PC-3 (cell line): ENCODE measurements at regions of chr17 and their contacts with region 1.

Region 1: DNA sequence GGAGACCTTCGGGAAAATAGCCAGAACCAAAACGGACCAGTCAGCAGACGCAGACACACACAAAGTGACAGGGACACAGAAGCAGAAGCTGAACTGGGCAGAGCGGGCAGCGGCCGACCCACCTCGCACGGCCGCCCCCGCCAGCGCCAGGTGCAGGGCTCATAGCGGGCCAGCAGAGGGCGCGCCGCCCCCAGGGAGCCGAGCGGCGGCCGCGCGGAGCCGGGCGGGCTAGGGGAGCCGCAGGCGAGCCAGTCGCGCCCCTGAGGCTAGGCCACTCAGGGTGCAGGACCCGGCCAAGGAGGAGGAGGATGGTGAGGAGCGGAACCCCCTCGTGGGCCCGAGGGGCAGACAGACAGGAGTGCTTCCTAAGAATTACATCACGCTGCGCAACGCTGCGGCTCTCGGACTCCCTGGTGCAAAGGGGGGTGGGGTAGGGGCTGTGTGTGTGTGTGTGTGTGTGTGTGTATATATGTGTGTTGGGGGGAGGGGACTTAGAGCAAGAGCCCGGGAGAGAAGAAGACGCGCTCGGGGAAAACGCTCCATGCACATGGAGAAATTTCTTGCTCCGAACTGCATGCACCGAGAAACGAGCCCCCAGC is 913 bp upstream of the NOG start:
- DNase-seq: peak; percentile 81
- ATAC-seq: peak; percentile 36
- H3K4me3 ChIP-seq: peak overlapping the region; percentile 74
- H3K27ac ChIP-seq: no peak overlapping the region
- H3K4me1 ChIP-seq: peaks cover 11% of the 10 kb centered on the region; the same call in 1 of the 2 replicates
- H3K27me3 ChIP-seq: peaks cover 26% of the 10 kb centered on the region
- CTCF ChIP-seq: peak; percentile 93

Region 2: DNA sequence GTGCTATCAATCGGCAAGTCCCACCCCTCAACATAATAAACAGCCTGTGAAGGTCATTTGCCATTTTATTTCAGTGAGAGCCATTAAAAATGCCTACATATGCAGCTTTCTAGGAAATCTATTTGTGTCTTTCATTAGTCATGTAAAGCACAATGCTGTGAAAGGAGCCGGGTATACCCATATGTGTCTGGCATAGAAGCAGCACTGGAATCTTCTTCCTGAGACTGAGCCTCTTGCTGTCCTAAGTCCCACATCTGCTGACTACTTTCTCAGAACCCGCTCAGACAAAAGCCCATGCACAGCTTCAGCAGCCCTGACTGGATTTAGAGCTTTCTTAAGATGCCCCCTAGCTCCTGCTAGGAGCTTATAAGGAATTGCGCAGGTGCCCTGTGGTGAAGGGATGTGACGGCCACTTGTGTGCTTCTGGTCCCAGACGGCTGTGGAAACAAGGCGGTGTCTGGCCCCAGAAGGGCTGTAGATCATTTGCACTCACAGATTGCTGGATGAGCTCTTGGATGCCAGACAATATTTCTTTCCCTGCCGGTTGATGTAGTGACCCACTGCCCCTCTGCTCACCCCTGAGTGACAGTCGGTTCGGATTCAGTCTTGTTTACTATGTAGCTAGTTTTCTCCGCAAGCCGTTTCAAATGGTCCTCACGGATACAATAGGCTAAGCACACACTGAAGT is 267.1 kb before region 1 on chr17:
- CTCF ChIA-PET with region 1: no interaction called
- POLR2A ChIA-PET with region 1: no interaction called
- intact Hi-C with region 1: no loop called
- DNase-seq: no peak
- ATAC-seq: no peak
- H3K4me3 ChIP-seq: no peak overlapping the region
- H3K27ac ChIP-seq: no peak overlapping the region
- H3K4me1 ChIP-seq: no peaks in the 10 kb centered on the region
- H3K27me3 ChIP-seq: peaks cover 67% of the 10 kb centered on the region
- CTCF ChIP-seq: no peak

Region 3: GRCh38 chr17:56499799-56500388 is 92.7 kb before region 1 on chr17:
- CTCF ChIA-PET with region 1: interaction called, 13 read pairs
- POLR2A ChIA-PET with region 1: no interaction called
- intact Hi-C with region 1: no loop called
- DNase-seq: peak; percentile 73
- ATAC-seq: no peak; the same call in 1 of the 2 replicates
- H3K4me3 ChIP-seq: no peak overlapping the region
- H3K27ac ChIP-seq: no peak overlapping the region
- H3K4me1 ChIP-seq: 0 out of 2 replicates have a peak, but pooled peaks cover 1% of the 10 kb centered on the region
- H3K27me3 ChIP-seq: peaks cover 32% of the 10 kb centered on the region
- CTCF ChIP-seq: peak; percentile 86

Region 4: GRCh38 chr17:56510554-56511342 is 81.8 kb before region 1 on chr17:
- CTCF ChIA-PET with region 1: no interaction called
- POLR2A ChIA-PET with region 1: no interaction called
- intact Hi-C with region 1: no loop called
- DNase-seq: no peak
- ATAC-seq: no peak
- H3K4me3 ChIP-seq: no peak overlapping the region
- H3K27ac ChIP-seq: no peak overlapping the region
- H3K4me1 ChIP-seq: peaks cover under 1% of the 10 kb centered on the region; the same call in 1 of the 2 replicates
- H3K27me3 ChIP-seq: peaks cover 53% of the 10 kb centered on the region
- CTCF ChIP-seq: no peak

Region 5: GRCh38 chr17:56604691-56605290 is 12.2 kb after region 1 on chr17:
- CTCF ChIA-PET with region 1: no interaction called
- POLR2A ChIA-PET with region 1: no interaction called
- intact Hi-C with region 1: no loop called
- DNase-seq: no peak
- ATAC-seq: no peak
- H3K4me3 ChIP-seq: no peak overlapping the region
- H3K27ac ChIP-seq: no peak overlapping the region
- H3K4me1 ChIP-seq: no peaks in the 10 kb centered on the region
- H3K27me3 ChIP-seq: no peaks in the 10 kb centered on the region
- CTCF ChIP-seq: no peak

Region 6: DNA sequence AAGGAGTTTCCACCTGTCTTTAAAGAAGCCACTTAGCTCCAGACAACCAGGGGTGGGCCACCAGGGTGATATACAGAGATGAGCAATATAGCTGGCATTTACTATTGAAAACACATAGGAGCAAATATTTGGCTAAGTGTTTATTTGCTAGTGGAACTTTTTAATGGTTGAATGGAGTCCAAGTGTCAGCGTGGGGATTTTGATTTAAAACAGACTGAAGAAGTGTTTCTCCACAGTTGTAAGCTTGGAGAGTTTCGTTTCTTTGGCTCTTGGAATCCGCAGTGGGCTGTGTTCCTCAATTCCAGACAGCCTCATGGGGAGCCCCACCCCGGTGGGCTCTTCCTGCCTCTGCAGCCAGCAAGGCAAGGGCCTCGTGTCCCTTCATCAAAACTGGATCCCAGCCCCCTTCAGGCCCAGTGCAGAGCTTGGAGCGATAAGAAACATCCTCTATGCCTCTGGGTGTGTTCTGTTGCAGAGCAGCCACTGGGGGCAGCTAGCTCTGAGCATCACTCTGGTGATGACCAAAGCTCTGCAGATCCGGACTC is 37.0 kb after region 1 on chr17:
- CTCF ChIA-PET with region 1: interaction called, 9 read pairs
- POLR2A ChIA-PET with region 1: no interaction called
- intact Hi-C with region 1: loop called (anchors 1 kb)
- DNase-seq: peak; percentile 71
- ATAC-seq: peak; percentile 97
- H3K4me3 ChIP-seq: no peak overlapping the region; the same call in 1 of the 2 replicates
- H3K27ac ChIP-seq: no peak overlapping the region
- H3K4me1 ChIP-seq: peaks cover 11% of the 10 kb centered on the region; the same call in 1 of the 2 replicates
- H3K27me3 ChIP-seq: no peaks in the 10 kb centered on the region
- CTCF ChIP-seq: peak; percentile 70

Region 7: DNA sequence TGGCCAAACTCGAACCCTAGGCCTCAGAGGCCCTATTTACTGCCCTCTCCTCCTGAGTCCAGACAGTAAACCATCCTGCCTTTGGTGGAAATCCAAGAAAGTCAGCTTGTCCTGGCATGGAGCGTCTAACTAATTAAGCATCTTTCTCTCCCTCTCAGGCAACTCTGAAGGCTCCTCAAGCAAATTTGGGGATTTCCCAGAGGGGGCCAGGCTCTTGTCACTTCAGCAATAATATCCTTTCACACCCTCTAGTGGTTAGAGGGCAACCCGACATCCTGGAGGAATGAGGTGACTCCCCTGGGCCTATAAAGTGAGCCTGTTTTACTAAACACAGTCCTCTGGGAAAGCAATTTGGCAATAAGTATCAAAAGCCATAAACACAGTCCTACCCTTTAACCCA is 61.3 kb after region 1 on chr17:
- CTCF ChIA-PET with region 1: interaction called, 3 read pairs
- POLR2A ChIA-PET with region 1: interaction called, 3 read pairs
- intact Hi-C with region 1: loop called (anchors 1 kb)
- DNase-seq: peak; percentile 91
- ATAC-seq: peak; percentile 87
- H3K4me3 ChIP-seq: no peak overlapping the region
- H3K27ac ChIP-seq: no peak overlapping the region
- H3K4me1 ChIP-seq: peaks cover 14% of the 10 kb centered on the region
- H3K27me3 ChIP-seq: no peaks in the 10 kb centered on the region
- CTCF ChIP-seq: peak; percentile 91

Region 8: GRCh38 chr17:56679115-56679766 is 86.7 kb after region 1 on chr17:
- CTCF ChIA-PET with region 1: interaction called, 3 read pairs
- POLR2A ChIA-PET with region 1: interaction called, 4 read pairs
- intact Hi-C with region 1: loop called (anchors 1 kb)
- DNase-seq: peak; percentile 68
- ATAC-seq: peak; percentile 45
- H3K4me3 ChIP-seq: peak overlapping the region; percentile 19; the same call in 1 of the 2 replicates
- H3K27ac ChIP-seq: peak overlapping the region; percentile 61
- H3K4me1 ChIP-seq: peaks cover 71% of the 10 kb centered on the region
- H3K27me3 ChIP-seq: no peaks in the 10 kb centered on the region
- CTCF ChIP-seq: peak; percentile 95

Region 9: DNA sequence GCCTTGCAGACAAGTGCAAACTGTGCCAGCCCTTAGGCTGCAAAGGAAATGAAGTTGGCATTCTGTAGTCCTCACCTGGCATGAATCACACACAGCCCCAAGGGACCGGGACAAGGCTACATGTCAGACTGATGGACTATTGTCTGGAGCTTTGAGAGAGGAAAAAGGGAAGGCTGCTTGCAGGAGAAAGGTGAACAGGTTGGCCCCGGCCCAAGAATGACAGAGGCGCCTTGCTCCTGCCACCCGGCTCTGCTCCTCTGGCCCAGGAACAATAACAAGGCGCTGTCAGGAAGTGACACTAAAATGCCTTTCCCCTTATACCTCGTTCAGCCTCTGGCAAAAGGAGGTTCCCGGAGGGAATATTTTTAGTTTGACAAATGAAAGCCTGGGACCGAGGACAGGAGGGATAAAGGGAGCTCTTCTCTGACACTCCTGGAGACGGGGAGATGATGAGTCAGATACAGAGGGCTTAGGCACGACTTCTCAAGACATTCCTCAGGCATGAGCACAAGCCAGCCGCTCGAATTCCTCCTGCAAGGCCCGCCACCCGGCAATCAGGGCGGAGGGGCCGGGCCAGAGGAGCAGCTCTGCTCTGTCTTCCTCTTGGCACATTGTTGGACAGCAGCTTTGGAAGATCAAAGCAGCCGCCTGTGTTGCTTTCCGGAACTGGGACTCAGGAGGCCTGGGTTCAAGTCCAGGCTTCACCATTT is 106.8 kb after region 1 on chr17:
- CTCF ChIA-PET with region 1: interaction called, 13 read pairs
- POLR2A ChIA-PET with region 1: interaction called, 11 read pairs
- intact Hi-C with region 1: loop called (anchors 1 kb)
- DNase-seq: peak; percentile 100
- ATAC-seq: peak; percentile 95
- H3K4me3 ChIP-seq: peak overlapping the region; percentile 46; the same call in 1 of the 2 replicates
- H3K27ac ChIP-seq: peak overlapping the region; percentile 90
- H3K4me1 ChIP-seq: peaks cover 23% of the 10 kb centered on the region
- H3K27me3 ChIP-seq: no peaks in the 10 kb centered on the region
- CTCF ChIP-seq: no peak

Region 10: DNA sequence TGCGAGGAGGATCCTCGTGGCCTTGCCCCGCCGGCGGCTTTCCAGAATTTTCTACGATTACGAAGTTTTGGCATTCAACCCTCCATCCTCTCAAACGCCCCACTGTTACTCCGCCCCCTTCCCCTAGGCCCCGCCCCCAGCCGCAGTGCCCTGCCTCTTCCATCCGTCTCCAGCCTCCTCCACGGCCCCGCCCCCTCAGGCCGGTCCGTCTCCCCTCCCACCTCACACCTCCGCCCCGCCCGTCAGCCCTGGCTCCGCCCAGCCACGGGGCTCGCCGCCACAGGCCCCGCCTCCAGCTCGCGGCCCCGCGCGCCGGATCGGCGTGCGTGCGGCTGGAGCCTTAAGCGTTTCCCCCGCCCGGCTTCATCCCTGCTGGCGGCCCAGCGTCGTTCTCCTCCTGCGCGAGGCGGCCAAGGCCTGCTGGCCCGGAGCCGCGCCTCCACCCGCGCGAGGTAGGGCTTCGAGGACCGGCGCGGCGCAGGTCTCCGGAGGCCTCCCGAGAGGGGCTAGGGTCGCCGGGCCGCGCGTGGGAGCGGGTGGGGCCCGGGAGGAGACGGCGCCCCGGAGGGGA is 241.3 kb after region 1 on chr17 and contains the starts of genes C17orf67 and DGKE:
- CTCF ChIA-PET with region 1: no interaction called
- POLR2A ChIA-PET with region 1: no interaction called
- intact Hi-C with region 1: loop called (anchors 2 kb)
- DNase-seq: peak; percentile 98
- ATAC-seq: peak; percentile 79
- H3K4me3 ChIP-seq: peak within 1 kb of the TSS; percentile 74
- H3K27ac ChIP-seq: peak within 1 kb of the TSS; percentile 16
- H3K4me1 ChIP-seq: peaks cover 43% of the 10 kb centered on the region
- H3K27me3 ChIP-seq: no peaks in the 10 kb centered on the region
- CTCF ChIP-seq: no peak
- total RNA-seq, gene C17orf67: 2.3 and 4.4 TPM in 2 replicates
- total RNA-seq, gene DGKE: 8.4 and 12.4 TPM in 2 replicates